ENCODE measurements at regions of chr16 and their contacts with region 1.

Region 1: DNA sequence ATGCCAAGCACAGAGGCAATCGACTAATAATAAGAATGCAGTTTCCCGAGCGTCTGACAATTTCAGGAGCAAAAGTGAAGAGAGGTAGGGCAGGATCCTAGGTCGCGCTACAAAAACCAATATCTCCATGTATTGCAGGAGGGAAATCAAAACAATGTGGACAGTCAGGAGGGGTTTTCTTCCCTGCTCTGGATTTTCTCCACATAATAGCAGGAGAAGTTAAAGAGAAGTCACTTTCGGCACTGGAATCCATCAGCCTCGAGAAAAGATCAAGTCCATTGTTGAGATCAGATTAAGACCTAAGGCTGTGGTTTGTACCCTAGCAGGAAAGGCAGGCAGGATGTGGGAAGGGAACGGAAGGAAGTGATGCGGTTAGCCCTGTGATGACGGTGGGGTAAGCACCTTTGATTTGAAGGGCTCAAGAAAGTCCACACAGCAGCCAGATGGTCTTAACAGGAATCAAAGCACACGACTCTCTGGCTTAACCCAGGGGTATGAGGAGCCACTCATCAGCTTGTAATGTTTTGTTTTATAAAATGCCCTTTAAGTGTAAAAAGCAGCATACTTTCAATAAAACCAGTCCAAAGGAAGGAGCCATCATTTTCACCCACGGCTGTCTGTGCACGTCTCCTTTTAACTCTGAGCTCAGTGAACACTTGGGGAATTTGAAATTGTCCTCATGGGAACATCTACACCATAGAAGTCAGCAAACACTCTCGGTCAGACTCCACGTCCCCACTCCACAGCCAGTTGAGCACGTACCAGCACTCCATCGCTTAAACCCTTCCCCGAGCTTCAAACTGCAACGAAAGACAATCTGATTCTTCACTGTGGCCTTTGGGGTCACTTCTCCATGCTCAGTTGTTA is 15.8 kb upstream of the AKTIP start:
- DNase-seq: no peak
- H3K27ac ChIP-seq: no peak overlapping the region
- CTCF ChIP-seq: no peak

Region 2: DNA sequence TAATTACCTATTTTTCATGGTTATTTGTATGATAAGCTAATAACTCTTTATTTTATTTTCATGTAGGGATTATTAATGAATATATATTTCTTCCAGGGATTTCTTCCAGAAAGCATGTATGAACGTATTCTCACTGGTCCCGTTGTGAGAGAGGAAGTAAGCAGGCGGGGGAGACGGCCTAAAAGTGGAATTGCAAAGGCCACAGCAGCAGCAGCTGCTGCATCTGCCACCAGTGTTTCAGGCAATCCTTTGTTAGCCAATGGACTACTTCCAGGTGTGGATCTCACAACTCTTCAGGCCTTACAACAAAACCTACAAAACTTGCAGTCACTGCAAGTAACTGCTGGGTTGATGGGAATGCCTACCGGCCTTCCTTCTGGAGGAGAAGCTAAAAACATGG is 194.9 kb before region 1 on chr16:
- CTCF ChIA-PET with region 1: no interaction called
- POLR2A ChIA-PET with region 1: interaction called, 13 read pairs
- DNase-seq: no peak
- H3K27ac ChIP-seq: no peak overlapping the region
- CTCF ChIP-seq: no peak

Region 3: DNA sequence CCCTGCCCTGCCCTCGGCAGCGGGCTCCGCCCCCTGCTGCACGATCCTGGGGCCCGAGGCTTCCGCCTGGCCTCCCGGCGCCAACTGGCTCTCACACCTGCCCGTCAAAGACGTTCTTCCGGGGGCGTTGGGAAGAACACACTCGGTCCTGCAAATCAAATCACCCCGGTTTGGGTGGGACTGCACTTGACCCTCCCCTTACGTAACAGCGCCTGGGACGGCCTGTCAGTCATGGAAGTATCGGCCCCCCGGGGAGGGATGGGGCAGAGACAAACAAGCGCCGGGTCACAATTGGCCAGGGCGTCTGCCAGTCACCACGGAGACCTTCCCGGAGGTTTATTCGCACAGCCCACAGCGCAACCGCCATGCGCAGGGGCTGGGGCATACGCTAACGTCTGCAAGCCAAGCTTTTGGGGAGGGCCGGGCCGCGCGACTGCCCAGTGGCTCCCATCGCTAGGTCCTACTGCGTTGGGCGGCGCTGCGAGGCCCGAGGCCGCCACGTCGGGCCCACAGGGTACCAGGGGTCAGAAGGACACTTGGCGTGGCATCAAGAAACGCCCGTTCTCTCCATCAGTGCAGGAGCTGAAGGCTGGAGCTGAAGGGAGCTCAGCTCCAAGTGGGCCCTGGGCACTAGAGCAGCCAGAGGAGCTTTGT is 15.4 kb before region 1 on chr16:
- CTCF ChIA-PET with region 1: no interaction called
- POLR2A ChIA-PET with region 1: no interaction called
- DNase-seq: peak; percentile 100
- H3K27ac ChIP-seq: peak overlapping the region; percentile 87
- CTCF ChIP-seq: no peak